ENCODE measurements at regions of chr16 and their contacts with region 1.

Region 1: DNA sequence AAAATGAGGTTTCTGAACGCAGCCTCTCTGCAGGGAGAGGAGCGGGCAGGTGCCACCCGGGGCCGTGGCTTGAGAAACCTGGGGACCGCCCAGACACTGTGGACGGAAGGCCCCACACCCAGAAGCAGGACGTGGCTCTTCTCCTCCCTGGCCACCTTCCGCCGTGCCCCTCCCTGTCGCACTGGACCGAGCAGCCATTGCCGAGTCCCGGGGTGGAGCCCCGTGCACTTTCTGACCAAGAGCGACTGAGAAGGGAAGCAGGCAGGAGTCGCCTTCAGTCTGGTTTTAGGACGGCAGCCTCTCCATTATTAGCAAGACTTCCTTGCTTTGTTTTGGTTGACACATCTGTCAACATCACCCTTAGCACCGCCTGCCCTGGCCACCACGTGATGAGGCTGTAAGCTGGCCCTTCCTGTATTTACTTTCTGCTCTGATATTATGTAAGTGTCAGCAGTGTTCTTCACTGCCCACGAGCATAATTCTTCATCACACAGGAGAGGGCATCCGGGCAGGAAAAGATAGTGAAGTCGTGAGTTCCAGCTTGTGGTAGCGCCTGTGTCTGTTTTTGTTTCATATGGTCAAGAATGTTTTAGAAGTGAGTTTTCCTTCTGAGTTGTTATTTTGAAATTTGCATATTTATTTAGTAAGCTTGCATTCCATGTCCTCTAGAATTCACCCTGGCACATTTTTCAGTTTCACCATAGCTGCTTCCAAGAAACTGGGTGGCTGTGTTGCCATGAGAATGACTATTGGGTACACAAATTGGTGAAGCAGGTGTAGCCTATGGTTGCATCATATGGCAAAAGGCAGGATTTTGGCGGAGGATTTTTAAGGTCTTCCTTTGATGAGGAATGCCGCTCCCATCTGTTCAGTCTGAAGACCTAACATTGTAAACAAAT is 1.0 kb downstream of the HERPUD1 start:
- DNase-seq: peak; percentile 66 to 84
- H3K4me3 ChIP-seq: peak overlapping the region; percentile 97
- H3K27ac ChIP-seq: peak overlapping the region; percentile 91
- H3K4me1 ChIP-seq: peaks cover 25% of the 10 kb centered on the region
- H3K27me3 ChIP-seq: no peaks in the 10 kb centered on the region
- CTCF ChIP-seq: no peak

Region 2: DNA sequence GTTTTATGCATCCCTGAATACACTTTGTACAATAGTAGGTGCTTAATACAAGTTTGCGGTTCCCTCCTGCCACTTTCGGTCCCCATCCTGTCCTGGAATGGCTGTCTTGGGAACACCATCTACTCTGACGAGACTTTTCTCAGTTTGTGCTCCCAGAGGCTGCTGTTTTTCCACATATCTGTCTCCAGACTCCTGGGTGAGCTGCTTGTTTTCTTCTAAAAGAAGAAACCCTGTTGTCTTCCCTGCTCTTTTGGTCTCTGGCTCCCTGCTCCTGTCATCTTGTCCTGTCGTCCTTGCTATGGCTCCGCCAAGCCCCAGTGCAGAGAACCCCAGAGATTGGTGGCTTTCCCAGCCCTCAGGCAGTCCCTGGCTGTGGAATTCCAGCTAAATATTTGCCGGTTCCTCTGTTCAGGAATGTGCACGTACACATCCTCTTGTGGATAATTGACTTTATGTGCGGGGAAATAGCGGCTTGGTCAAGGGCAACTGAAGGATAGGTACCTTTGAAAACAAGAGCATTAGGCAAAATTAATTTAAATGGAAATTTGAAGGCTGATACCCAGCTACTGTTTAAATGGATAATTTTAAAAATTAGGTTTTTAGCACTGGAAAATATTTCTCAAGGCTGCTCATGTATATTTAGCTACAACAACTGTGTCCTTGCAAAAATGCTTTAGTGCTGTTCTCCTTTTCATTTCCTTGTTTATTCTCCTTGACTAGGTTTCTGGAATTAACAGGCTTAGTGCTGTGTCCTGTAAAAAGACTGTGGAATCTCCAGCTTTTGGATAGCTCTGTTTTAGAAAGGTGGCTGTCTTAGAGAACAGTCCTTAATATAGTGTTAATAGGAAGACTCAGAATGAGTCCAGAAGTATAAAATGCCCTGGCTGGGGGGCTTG is 118.2 kb before region 1 on chr16:
- CTCF ChIA-PET with region 1: interaction called, 18 read pairs
- POLR2A ChIA-PET with region 1: no interaction called
- intact Hi-C with region 1: no loop called
- DNase-seq: peak in 1 of 2 experiments; percentile 33
- H3K4me3 ChIP-seq: no peak overlapping the region
- H3K27ac ChIP-seq: no peak overlapping the region
- H3K4me1 ChIP-seq: peaks cover 20% of the 10 kb centered on the region
- H3K27me3 ChIP-seq: no peaks in the 10 kb centered on the region
- CTCF ChIP-seq: no peak

Region 3: GRCh38 chr16:56944954-56945839 is 12.2 kb after region 1 on chr16:
- CTCF ChIA-PET with region 1: no interaction called
- POLR2A ChIA-PET with region 1: interaction called, 3 read pairs
- intact Hi-C with region 1: loop called (anchors 1 kb)
- DNase-seq: peak; percentile 64 to 74
- H3K4me3 ChIP-seq: no peak overlapping the region
- H3K27ac ChIP-seq: peak overlapping the region; percentile 57
- H3K4me1 ChIP-seq: peaks cover 24% of the 10 kb centered on the region
- H3K27me3 ChIP-seq: no peaks in the 10 kb centered on the region
- CTCF ChIP-seq: no peak

Region 4: GRCh38 chr16:57577750-57578224 is 644.8 kb after region 1 on chr16:
- CTCF ChIA-PET with region 1: no interaction called
- POLR2A ChIA-PET with region 1: no interaction called
- intact Hi-C with region 1: no loop called
- DNase-seq: no peak
- H3K4me3 ChIP-seq: no peak overlapping the region
- H3K27ac ChIP-seq: no peak overlapping the region
- H3K4me1 ChIP-seq: no peaks in the 10 kb centered on the region
- H3K27me3 ChIP-seq: no peaks in the 10 kb centered on the region
- CTCF ChIP-seq: no peak

Measured in PC-9 (cell line).